ENCODE measurements at regions of chr9 and their contacts with region 1.

Region 1: DNA sequence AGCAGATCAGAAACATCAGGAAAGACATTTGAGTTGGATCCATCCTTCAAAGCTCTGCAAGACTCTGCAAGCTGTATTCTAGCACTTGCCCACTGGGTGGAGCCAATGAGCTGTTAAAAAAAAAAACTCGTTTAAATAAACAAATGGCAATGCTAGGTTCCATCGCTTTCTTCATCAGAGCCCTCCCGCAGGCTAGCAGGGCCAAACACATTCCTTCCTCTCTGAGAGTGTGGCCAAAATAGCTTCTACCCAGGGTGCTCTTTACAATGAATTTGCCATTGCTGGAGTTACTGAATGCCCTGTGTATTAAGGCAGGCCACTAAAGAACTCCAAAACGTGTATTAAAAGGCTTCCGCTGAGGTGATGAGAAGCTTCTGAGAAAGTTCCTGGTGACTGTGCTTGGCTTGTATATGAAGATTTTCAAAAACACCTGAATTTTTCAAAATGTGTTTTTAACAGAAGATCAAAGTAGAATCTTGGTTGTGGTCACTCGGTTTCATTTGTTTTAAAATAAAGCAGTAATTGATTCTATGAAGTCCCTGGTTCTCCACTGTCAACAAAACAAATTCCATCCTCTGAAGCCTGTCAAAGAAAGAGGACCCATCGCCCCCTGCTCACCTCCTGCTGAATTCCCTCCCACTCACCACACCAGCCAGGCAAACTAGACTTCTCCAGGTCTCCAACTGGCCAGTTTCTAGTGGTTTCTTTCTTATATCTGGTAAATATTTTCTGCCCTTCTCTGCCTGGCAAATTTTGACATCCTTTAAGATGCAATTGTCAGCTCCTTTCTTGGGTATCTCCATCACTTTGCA is 36.5 kb upstream of the EQTN start:
- DNase-seq: peak in 4 of 5 donors; percentile 47 to 59 (median 58)
- H3K4me3 ChIP-seq: no peak overlapping the region
- H3K4me3 Mint-ChIP-seq: no peak overlapping the region
- H3K27ac ChIP-seq: no peak overlapping the region
- H3K27ac Mint-ChIP-seq: no peak overlapping the region
- H3K4me1 ChIP-seq: no peaks in the 10 kb centered on the region
- H3K4me1 Mint-ChIP-seq: no peaks in the 10 kb centered on the region
- H3K27me3 ChIP-seq: no peaks in the 10 kb centered on the region
- H3K27me3 Mint-ChIP-seq: peaks cover 2 to 5% of the 10 kb centered on the region in 2 donors

Region 2: GRCh38 chr9:27348785-27349695 is 15.6 kb after region 1 on chr9:
- CTCF ChIA-PET with region 1: interaction called, 10 read pairs
- POLR2A ChIA-PET with region 1: no interaction called
- intact Hi-C with region 1: no loop called
- DNase-seq: no peak
- H3K4me3 ChIP-seq: no peak overlapping the region
- H3K4me3 Mint-ChIP-seq: no peak overlapping the region
- H3K27ac ChIP-seq: no peak overlapping the region
- H3K27ac Mint-ChIP-seq: no peak overlapping the region
- H3K4me1 ChIP-seq: no peaks in the 10 kb centered on the region
- H3K4me1 Mint-ChIP-seq: peaks cover 0 to 10% (median under 1%) of the 10 kb centered on the region in 4 donors
- H3K27me3 ChIP-seq: no peaks in the 10 kb centered on the region
- H3K27me3 Mint-ChIP-seq: no peaks in the 10 kb centered on the region

Region 3: DNA sequence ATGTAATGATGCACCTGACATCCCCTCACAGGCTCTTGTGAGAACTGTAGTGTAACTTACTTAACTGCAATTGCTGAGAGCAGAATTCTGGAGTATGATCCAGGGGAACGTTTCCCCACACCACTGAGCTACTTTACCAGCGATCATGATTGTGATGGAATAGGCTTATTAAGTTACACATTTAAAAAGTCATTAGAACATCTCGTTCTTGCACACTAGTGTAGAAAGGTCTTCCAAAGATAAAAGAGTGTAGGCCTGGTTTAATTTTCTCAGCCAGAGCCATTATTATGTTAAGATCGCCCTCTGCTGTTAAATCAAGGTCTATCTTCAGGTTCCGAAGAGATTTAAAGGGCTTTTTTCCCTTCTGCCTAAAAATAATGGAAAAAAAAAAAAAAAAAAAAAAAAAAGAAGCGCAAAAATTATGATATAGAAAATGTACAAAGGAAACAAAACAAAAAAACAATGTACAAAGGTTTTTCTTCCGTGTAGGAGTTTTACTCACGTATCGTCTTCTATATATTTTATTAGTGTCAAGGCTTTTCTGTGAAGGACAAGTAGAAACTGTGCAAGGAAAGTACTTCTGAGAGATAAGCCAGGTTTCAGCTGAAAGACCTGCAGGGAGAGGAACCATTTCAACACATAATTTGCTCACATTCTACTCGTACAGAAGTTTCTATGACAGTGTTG is 214.8 kb after region 1 on chr9:
- CTCF ChIA-PET with region 1: interaction called, 10 read pairs
- POLR2A ChIA-PET with region 1: no interaction called
- intact Hi-C with region 1: loop called (anchors 1 kb)
- DNase-seq: no peak
- H3K4me3 ChIP-seq: no peak overlapping the region
- H3K4me3 Mint-ChIP-seq: no peak overlapping the region
- H3K27ac ChIP-seq: no peak overlapping the region
- H3K27ac Mint-ChIP-seq: no peak overlapping the region
- H3K4me1 ChIP-seq: no peaks in the 10 kb centered on the region
- H3K4me1 Mint-ChIP-seq: peaks cover 0 to 1% (median under 1%) of the 10 kb centered on the region in 4 donors
- H3K27me3 ChIP-seq: no peaks in the 10 kb centered on the region
- H3K27me3 Mint-ChIP-seq: no peaks in the 10 kb centered on the region